ENCODE measurements at regions of chr16 and their contacts with region 1.

Region 1: DNA sequence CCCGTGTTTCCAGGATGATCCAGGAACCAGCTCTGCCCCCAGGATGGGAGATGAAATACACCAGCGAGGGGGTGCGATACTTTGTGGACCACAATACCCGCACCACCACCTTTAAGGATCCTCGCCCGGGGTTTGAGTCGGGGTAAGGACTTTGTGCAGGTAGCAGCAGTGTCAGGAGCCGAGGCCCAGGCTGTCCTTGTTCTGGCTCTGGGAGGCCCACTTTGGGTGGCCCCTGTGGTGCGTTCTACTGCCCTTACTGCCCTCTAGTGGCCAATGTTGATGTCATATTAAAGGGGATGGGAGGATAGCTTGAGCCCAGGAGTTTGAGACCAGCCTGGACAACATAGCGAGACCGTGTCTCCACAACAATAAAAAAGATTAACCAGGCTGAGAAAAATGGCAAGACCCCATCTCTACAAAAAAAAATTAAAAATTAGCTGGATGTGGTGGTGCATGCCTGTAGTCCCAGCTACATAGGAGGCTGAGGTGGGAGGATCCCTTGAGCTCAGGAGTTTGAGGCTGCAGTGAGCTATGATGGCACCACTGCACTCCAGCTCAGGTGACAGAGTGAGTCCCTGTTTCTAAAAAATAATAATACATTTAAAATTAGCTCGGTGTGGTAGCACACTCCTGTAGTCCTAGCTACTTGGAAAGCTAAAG is 20.9 kb upstream of the CLEC18A start:
- DNase-seq: peak; percentile 41
- H3K4me3 Mint-ChIP-seq: no peak overlapping the region
- H3K27ac Mint-ChIP-seq: no peak overlapping the region
- H3K4me1 Mint-ChIP-seq: no peaks in the 10 kb centered on the region
- H3K27me3 Mint-ChIP-seq: no peaks in the 10 kb centered on the region

Region 2: DNA sequence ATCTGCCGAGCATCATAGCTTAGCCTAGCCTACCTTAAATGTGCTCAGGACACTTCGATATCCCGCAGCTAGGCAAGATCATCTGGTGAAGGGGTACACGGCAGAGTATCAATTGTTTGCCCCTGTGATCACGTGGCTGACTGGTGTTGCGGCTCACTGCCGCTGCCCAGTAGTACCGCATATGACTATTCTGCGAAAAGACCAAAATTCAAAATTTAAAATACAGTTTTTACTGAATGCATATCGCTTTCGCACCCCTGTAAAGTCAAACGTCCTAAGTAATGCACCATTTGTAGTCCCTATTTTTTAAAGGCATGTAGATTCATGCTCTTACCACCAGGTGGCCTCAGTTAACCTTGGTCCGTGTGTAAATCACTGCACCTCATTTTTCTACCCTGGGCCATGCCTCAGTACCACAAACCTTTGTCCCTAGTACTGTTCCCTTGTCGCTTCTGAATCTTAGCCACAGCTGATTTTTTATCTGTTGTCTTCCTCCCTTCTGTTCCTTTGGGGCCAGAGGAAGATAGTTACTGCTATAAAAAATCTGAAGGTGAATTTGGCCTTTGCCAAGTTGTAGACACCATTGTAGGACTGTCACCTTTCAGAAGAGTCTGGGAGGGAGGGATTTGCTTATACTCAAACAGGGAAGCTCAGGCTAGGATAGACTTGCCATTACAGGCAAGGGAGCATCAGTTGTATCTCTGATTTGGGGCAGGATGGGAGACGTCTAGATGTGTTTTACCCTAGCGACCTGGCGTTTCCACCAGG is 133.7 kb before region 1 on chr16:
- CTCF ChIA-PET with region 1: interaction called, 30 read pairs
- POLR2A ChIA-PET with region 1: no interaction called
- DNase-seq: peak; percentile 19
- H3K4me3 Mint-ChIP-seq: no peak overlapping the region
- H3K27ac Mint-ChIP-seq: no peak overlapping the region
- H3K4me1 Mint-ChIP-seq: no peaks in the 10 kb centered on the region
- H3K27me3 Mint-ChIP-seq: no peaks in the 10 kb centered on the region

Region 3: GRCh38 chr16:69917739-69918138 is 12.5 kb before region 1 on chr16:
- CTCF ChIA-PET with region 1: interaction called, 23 read pairs
- POLR2A ChIA-PET with region 1: no interaction called
- DNase-seq: no peak
- H3K4me3 Mint-ChIP-seq: no peak overlapping the region
- H3K27ac Mint-ChIP-seq: no peak overlapping the region
- H3K4me1 Mint-ChIP-seq: no peaks in the 10 kb centered on the region
- H3K27me3 Mint-ChIP-seq: no peaks in the 10 kb centered on the region